Activated naive CD4-positive, alpha-beta T cell treated with anti-CD3 and anti-CD28 coated beads for 36 hours (primary cell): ENCODE measurements at regions of chr11 and their contacts with region 1.

Region 1: GRCh38 chr11:95067039-95067840 is 521 bp downstream of the SRSF8 start:
- DNase-seq: peak; percentile 82
- H3K4me3 Mint-ChIP-seq: peak overlapping the region; percentile 91
- H3K27ac Mint-ChIP-seq: peak overlapping the region; percentile 96
- H3K4me1 Mint-ChIP-seq: peaks cover 23% of the 10 kb centered on the region
- H3K27me3 Mint-ChIP-seq: no peaks in the 10 kb centered on the region

Region 2: GRCh38 chr11:94493281-94494125 is 573.7 kb before region 1 on chr11 and contains the starts of genes ANKRD49 and MRE11:
- CTCF ChIA-PET with region 1: no interaction called
- intact Hi-C with region 1: loop called (anchors 5 kb)
- DNase-seq: peak; percentile 97
- H3K4me3 Mint-ChIP-seq: peak within 1 kb of the TSS; percentile 93
- H3K27ac Mint-ChIP-seq: peak within 1 kb of the TSS; percentile 95
- H3K4me1 Mint-ChIP-seq: peaks cover 25% of the 10 kb centered on the region
- H3K27me3 Mint-ChIP-seq: no peaks in the 10 kb centered on the region
- total RNA-seq, gene ANKRD49: 16.3 to 19.1 TPM
- total RNA-seq, gene MRE11: 33.1 to 37.3 TPM

Region 3: GRCh38 chr11:94876645-94877442 is 190.4 kb before region 1 on chr11:
- CTCF ChIA-PET with region 1: no interaction called
- intact Hi-C with region 1: loop called (anchors 2 kb)
- DNase-seq: peak; percentile 86
- H3K4me3 Mint-ChIP-seq: no peak overlapping the region
- H3K27ac Mint-ChIP-seq: peak overlapping the region; percentile 59
- H3K4me1 Mint-ChIP-seq: peaks cover 23% of the 10 kb centered on the region
- H3K27me3 Mint-ChIP-seq: no peaks in the 10 kb centered on the region

Region 4: DNA sequence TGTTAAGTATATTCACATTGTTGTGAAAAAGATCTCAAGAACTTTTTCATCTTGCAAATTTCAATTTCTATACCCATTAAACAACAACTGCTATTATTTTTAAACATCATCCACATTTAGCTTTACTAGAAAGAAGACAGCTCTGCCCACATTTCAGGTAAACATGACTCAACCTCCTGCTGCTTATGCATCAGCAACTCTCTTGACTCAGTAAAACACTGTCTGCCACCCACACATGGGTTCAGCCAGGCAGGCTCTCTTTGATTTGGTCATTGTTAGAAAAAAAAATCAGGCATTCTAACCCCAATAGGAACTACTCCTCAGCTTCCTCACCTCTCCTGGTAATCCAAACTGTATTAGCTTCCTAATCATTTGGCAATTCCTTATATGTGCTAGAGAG is 17.3 kb after region 1 on chr11:
- CTCF ChIA-PET with region 1: interaction called, 132 read pairs
- intact Hi-C with region 1: loop called (anchors 1 kb)
- DNase-seq: peak; percentile 84
- H3K4me3 Mint-ChIP-seq: no peak overlapping the region
- H3K27ac Mint-ChIP-seq: peak overlapping the region; percentile 69
- H3K4me1 Mint-ChIP-seq: peaks cover 42% of the 10 kb centered on the region
- H3K27me3 Mint-ChIP-seq: no peaks in the 10 kb centered on the region

Region 5: DNA sequence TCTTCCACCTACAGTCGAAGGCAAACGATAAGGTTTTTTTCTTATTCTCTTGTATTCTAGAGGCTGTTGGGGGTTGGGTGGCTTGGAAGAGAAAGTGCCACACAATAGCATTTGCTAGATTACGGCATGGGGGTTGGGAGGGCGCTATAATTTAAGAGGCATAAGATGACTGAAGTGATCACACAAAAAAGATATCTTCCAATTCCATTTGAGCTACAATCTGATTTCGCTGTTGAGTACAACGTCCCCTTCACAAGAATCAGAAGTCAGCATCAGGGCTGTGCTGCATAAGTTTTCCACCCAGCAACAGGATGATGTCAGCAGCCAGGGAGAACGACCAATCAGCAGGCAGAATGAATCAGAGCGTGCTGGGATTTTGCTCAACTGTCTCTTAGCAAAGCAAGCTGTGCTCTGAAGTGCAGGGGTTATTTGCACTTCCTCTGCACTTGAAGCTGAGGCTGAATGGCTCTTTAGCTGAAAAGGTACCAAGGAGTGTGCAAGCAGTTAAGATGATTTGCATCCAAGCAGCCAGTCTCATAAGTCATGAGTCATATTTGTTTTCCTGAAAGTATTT is 187.0 kb after region 1 on chr11:
- CTCF ChIA-PET with region 1: no interaction called
- intact Hi-C with region 1: loop called (anchors 1 kb)
- DNase-seq: peak; percentile 95
- H3K4me3 Mint-ChIP-seq: peak overlapping the region; percentile 83
- H3K27ac Mint-ChIP-seq: peak overlapping the region; percentile 92
- H3K4me1 Mint-ChIP-seq: peaks cover 47% of the 10 kb centered on the region
- H3K27me3 Mint-ChIP-seq: no peaks in the 10 kb centered on the region

Region 6: GRCh38 chr11:95764267-95764898 is 697.1 kb after region 1 on chr11:
- CTCF ChIA-PET with region 1: no interaction called
- intact Hi-C with region 1: loop called (anchors 2 kb)
- DNase-seq: no peak
- H3K4me3 Mint-ChIP-seq: no peak overlapping the region
- H3K27ac Mint-ChIP-seq: no peak overlapping the region
- H3K4me1 Mint-ChIP-seq: no peaks in the 10 kb centered on the region
- H3K27me3 Mint-ChIP-seq: peaks cover 1% of the 10 kb centered on the region